Posterior vena cava (tissue), 2 donors: ENCODE measurements at regions of chr9 and their contacts with region 1.

Region 1: GRCh38 chr9:22913518-22913917 is 466.9 kb downstream of the DMRTA1 start:
- DNase-seq: no peak

Region 2: DNA sequence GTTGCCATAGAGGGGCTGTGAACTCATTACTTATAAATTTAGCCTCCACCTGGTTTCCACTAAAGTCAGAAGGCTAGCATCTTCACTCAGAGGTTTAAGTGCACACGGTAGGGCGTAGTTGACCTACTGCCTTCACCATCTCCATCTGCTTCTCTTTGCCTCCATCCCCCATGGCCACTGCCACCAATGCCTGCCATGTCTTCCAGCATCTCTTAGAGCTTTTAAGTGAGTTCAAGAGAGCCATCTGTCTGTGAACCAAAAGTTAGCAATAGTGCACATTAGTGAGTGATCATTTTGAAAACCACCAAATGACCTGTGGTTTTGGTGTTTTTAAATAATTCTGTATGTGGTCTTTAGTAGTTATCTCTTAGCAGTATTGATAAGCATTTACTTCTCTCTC is 364.9 kb before region 1 on chr9:
- intact Hi-C with region 1: loop called in 1 of 2 experiments (anchors 5 kb)
- DNase-seq: no peak

Region 3: DNA sequence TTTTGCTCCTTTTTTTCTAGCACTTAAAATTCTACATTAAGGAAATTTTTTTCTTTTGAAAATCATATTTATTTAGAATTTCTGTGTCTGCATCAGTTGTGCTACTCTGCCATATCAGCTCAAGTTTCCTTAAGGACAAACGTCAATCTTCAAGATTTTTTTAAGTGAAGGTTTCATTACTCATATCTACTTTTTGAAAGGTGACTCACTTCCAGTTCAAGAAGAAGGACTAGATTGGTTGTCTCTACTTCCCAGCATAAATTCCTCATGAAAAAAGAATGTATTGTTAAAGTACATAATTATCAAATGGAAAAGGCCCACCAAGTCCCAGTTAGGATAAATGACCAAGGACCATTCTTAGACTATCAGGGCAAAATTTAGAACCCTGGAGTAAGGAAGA is 159.6 kb after region 1 on chr9:
- intact Hi-C with region 1: no loop called
- DNase-seq: no peak